Activated CD4-positive, alpha-beta memory T cell treated with anti-CD3 and anti-CD28 coated beads, Interleukin-2, amount 10 ng/mL, durations not matched to agents 7 days and 5 days (primary cell): ENCODE measurements at regions of chr11 and their contacts with region 1.

Region 1: GRCh38 chr11:67239783-67240575 is 26.3 kb upstream of the GRK2 start:
- DNase-seq: peak; percentile 97
- H3K4me3 Mint-ChIP-seq: peak overlapping the region; percentile 99
- H3K27ac Mint-ChIP-seq: peak overlapping the region; percentile 96
- H3K4me1 Mint-ChIP-seq: peaks cover 49% of the 10 kb centered on the region
- H3K27me3 Mint-ChIP-seq: no peaks in the 10 kb centered on the region

Region 2: DNA sequence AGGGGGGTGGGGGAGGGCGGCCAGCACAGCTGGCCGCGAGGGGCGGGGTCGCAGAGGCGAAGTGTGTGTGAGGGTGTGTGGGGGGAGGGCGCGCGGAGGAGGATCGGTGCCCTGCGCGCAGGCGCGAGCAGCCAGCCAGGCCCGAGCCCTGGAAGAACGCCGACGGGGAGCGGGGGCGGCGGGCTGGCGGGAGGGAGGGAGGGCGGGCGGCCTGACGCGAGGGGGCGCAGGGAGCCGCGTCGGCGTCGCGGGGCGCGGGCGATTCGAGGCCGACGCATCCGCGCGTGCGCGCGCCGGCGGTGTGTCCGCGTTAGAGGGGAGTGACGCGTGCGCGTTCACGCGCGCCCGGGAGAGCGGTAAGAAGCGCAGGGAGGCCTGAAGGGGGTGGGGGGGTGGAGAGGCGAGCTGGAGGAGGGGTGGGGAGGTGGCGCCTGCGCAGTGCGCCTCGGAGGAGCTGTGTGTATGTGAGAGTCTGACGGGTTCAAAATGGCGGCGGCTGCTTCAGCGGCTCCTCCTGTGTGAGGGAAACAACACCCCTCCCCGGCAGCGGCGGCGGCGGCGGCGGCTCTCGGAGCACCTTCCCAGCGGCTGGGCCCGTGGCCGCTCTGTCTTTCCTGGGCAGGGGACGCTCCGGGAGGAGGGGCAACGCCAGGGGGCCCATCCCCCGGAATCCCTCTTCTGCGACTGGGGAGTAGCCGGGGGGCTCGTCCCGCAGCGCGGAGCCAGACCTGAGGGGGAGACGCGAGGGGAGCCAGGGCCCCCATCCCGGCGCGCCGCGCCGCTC is 121.0 kb before region 1 on chr11 and contains the start of gene KDM2A:
- CTCF ChIA-PET with region 1: interaction called, 11 read pairs
- POLR2A ChIA-PET with region 1: interaction called, 24 read pairs
- DNase-seq: peak; percentile 99
- H3K4me3 Mint-ChIP-seq: peak within 1 kb of the TSS; percentile 98
- H3K27ac Mint-ChIP-seq: peak within 1 kb of the TSS; percentile 93
- H3K4me1 Mint-ChIP-seq: peaks cover 30% of the 10 kb centered on the region
- H3K27me3 Mint-ChIP-seq: peaks cover 8% of the 10 kb centered on the region
- total RNA-seq, gene KDM2A: 87.1 to 95.9 TPM

Region 3: GRCh38 chr11:67211656-67212436 is 28.1 kb before region 1 on chr11:
- CTCF ChIA-PET with region 1: interaction called, 4 read pairs
- POLR2A ChIA-PET with region 1: interaction called, 13 read pairs
- DNase-seq: no peak
- H3K4me3 Mint-ChIP-seq: no peak overlapping the region
- H3K27ac Mint-ChIP-seq: no peak overlapping the region
- H3K4me1 Mint-ChIP-seq: no peaks in the 10 kb centered on the region
- H3K27me3 Mint-ChIP-seq: no peaks in the 10 kb centered on the region

Region 4: DNA sequence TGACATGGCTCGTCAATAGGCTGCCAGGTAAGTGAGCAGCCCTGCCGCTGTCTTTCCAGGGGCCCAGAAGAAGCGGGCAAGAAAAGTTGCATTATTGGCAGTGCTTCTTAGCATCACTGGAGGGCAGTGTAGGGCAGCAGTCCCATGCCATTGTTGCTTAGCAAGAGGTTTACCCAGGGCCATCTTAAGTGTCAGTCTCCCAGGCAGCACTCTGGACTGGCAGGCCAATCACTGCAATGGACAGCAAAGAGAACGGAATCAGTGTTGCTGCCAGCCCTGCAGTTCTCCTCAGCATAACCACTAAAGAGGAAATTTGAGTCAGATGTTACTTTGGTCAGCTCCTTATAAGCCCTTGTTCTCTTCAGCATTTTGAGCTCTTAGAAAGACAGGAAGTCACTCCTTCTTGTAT is 12.9 kb after region 1 on chr11:
- CTCF ChIA-PET with region 1: interaction called, 41 read pairs
- POLR2A ChIA-PET with region 1: interaction called, 66 read pairs
- DNase-seq: peak; percentile 54
- H3K4me3 Mint-ChIP-seq: no peak overlapping the region
- H3K27ac Mint-ChIP-seq: peak overlapping the region; percentile 81
- H3K4me1 Mint-ChIP-seq: peaks cover 47% of the 10 kb centered on the region
- H3K27me3 Mint-ChIP-seq: no peaks in the 10 kb centered on the region

Region 5: DNA sequence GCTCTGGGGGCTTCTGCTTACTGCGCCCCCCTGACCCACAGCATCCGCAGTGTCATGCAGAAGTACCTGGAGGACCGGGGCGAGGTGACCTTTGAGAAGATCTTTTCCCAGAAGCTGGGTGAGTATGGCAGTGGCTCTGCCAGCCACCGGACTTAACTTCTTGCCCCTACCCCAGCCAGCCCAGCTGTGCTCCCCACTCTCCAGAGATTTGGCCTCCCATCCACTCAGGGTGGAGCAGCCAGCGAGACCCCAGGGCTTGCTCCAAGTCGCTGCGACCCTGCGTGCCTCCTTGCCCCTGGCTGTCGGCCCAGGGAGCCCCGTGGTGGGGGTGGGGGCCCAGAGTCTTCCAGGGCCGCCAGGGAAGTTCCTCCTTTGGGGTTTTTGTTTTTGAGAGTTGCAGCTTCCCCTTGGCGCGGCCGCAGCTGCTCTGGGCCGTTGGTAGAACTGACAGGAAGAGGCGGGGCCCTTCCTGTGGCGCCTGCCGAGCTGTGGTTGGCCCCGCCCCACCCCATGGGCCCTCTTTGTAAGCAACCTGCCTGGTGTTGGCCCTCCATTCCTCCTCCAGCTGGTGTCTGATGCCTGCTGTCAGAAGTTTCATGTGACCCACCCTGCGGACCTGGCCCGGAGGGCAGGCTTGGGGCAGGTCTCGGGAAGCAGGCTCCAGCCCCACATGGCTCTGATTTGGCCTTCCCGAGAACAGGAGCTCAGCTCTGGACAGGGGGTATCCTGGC is 37.4 kb after region 1 on chr11:
- CTCF ChIA-PET with region 1: no interaction called
- POLR2A ChIA-PET with region 1: interaction called, 36 read pairs
- DNase-seq: peak; percentile 94
- H3K4me3 Mint-ChIP-seq: peak overlapping the region; percentile 77
- H3K27ac Mint-ChIP-seq: peak overlapping the region; percentile 93
- H3K4me1 Mint-ChIP-seq: peaks cover 80% of the 10 kb centered on the region
- H3K27me3 Mint-ChIP-seq: no peaks in the 10 kb centered on the region

Region 6: DNA sequence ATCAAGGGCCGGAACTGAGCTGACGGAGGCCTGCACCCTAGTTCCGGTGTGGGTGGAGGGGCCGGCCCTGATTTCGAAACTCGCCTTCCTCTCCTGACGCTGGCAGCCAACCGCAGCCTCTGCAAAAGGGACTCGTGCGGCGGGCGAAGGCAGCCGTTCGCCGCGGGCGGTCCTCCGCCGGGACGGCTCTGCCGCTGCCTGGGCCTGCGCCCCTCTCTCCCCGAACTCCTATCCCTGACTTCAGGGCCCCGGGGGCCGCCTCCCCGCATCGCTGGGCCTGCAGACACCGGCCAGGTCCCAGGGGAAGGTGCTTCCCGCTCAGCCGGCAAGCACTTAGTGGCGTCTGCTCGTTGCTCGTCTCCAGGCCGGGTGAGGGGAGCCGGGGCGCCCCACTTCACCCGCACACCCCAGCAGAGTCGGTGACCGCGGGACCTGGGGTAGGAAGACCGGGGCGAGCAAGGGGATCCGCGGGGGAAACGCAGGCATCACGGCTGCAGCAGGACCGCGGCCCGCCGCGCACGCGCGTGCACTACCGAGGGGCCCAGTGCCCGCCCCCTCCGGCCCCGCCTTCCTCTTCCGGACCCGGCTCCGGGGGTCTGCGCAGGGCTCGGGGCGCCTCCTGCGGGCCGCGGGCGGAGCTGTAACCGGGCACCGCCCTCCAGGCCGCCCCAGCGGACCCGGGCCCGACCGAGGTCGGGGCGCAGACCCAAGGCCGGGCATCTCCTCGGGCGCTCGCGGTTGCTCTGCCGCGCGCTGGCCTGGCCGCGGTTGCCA is 48.7 kb after region 1 on chr11:
- CTCF ChIA-PET with region 1: interaction called, 3 read pairs
- POLR2A ChIA-PET with region 1: interaction called, 23 read pairs
- DNase-seq: peak; percentile 94
- H3K4me3 Mint-ChIP-seq: peak overlapping the region; percentile 74
- H3K27ac Mint-ChIP-seq: peak overlapping the region; percentile 99
- H3K4me1 Mint-ChIP-seq: peaks cover 76% of the 10 kb centered on the region
- H3K27me3 Mint-ChIP-seq: no peaks in the 10 kb centered on the region

Region 7: DNA sequence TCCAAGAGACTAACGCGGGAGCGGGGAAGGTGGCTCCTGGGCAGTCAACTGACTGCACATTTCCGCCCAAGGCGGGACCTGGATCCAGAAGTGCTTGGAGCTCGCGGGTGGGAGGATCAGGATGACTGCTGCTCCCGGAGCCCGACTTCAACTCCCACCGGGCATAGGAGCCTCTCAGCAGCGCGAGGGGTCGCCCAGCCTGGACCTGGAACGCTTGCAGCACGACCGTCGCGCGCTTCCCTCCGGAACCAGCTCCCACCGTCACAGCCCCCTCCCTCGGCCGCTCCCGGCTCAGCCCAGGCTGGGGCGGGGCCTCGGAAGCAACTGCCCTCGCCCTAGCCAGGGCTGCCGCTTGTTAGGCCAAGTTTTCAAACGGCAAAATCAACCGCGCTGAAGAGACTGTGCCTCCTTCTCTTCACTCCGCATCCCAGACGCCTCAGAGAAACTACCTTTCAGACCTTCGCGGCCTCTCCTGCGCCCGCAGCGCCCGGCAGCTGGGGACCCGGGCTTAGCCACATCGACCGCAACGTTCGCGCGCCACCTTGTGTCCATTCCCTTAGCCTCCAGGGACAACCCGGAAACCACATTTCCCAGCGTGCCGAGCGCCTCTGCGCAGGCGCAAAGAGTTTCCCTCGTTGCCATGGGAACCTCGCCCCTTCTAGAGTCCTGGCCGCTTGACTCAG is 77.4 kb after region 1 on chr11:
- CTCF ChIA-PET with region 1: interaction called, 4 read pairs
- POLR2A ChIA-PET with region 1: interaction called, 19 read pairs
- DNase-seq: peak; percentile 99
- H3K4me3 Mint-ChIP-seq: peak overlapping the region; percentile 83
- H3K27ac Mint-ChIP-seq: peak overlapping the region; percentile 96
- H3K4me1 Mint-ChIP-seq: peaks cover 44% of the 10 kb centered on the region
- H3K27me3 Mint-ChIP-seq: no peaks in the 10 kb centered on the region